ENCODE measurements at regions of chr6 and their contacts with region 1.

Region 1: GRCh38 chr6:90413867-90414266 is 117.2 kb upstream of the BACH2 start:
- DNase-seq: peak; percentile 53
- CTCF ChIP-seq: no peak

Region 2: GRCh38 chr6:90425161-90425641 is 11.3 kb after region 1 on chr6:
- CTCF ChIA-PET with region 1: interaction called, 19 read pairs
- POLR2A ChIA-PET with region 1: no interaction called
- DNase-seq: peak; percentile 67
- CTCF ChIP-seq: no peak